Heart right ventricle (tissue), 16 donors: ENCODE measurements at regions of chr10 and their contacts with region 1.

Region 1: GRCh38 chr10:103192451-103193106 is 493 bp downstream of the NT5C2 start:
- DNase-seq: peak; percentile 82 to 86
- ATAC-seq: peak; percentile 70 to 83 (median 77)
- H3K4me3 ChIP-seq: peak overlapping the region; percentile 61 to 97 (median 82)
- H3K27ac ChIP-seq: peak overlapping the region; percentile 93 to 100 (median 98)
- H3K4me1 ChIP-seq: peaks cover 3 to 76% (median 60%) of the 10 kb centered on the region in 9 donors
- H3K27me3 ChIP-seq: no peaks in the 10 kb centered on the region
- CTCF ChIP-seq: peak in 1 of 9 donors; percentile 4

Region 2: GRCh38 chr10:102917962-102918816 is 274.4 kb before region 1 on chr10 and contains the start of gene CNNM2:
- intact Hi-C with region 1: loop called in 1 of 10 experiments (anchors 5 kb)
- DNase-seq: peak; percentile 99 to 100
- ATAC-seq: peak; percentile 96 to 99 (median 98)
- H3K4me3 ChIP-seq: peak within 1 kb of the TSS; percentile 65 to 100 (median 91)
- H3K27ac ChIP-seq: peak within 1 kb of the TSS; percentile 58 to 93 (median 84)
- H3K4me1 ChIP-seq: peaks cover 6 to 61% (median 43%) of the 10 kb centered on the region in 9 donors
- H3K27me3 ChIP-seq: peaks cover 0 to 13% (median 0%) of the 10 kb centered on the region in 7 donors
- CTCF ChIP-seq: peak in 1 of 9 donors; percentile 19
- total RNA-seq, gene CNNM2: 2.0 to 5.3 (median 4.1) TPM

Region 3: DNA sequence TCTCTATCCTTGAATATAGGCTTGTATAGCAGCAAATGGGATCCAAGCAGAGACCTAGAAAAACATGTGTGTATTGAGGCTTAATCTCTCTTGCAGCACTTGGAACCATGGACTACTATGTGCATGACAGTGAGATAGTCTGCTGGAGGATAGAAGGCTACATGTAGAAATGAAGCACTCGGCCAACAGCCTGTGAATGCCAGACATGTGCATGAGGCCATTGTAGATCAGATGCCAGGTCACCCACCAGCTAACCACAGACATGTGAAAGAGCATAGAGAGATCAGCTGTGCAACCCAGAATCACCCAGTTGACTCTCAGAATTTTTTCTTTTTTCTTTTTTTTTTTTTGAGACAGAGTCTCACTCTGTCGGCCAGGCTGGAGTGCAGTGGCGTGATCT is 90.4 kb before region 1 on chr10:
- intact Hi-C with region 1: loop called in 1 of 10 experiments (anchors 5 kb)
- DNase-seq: no peak
- ATAC-seq: peak in 5 of 8 donors; percentile 28 to 59 (median 51)
- H3K4me3 ChIP-seq: no peak overlapping the region
- H3K27ac ChIP-seq: no peak overlapping the region
- H3K4me1 ChIP-seq: peaks cover 0 to 34% (median 4%) of the 10 kb centered on the region in 9 donors
- H3K27me3 ChIP-seq: no peaks in the 10 kb centered on the region
- CTCF ChIP-seq: no peak

Region 4: GRCh38 chr10:103145860-103146466 is 46.6 kb before region 1 on chr10:
- intact Hi-C with region 1: loop called in 5 of 10 experiments (anchors 5 kb)
- DNase-seq: peak; percentile 21 to 91
- ATAC-seq: peak; percentile 80 to 91 (median 88)
- H3K4me3 ChIP-seq: peak overlapping the region in 6 of 10 donors; percentile 3 to 39 (median 35)
- H3K27ac ChIP-seq: peak overlapping the region; percentile 28 to 74 (median 62)
- H3K4me1 ChIP-seq: peaks cover 0 to 63% (median 30%) of the 10 kb centered on the region in 9 donors
- H3K27me3 ChIP-seq: no peaks in the 10 kb centered on the region
- CTCF ChIP-seq: no peak

Region 5: GRCh38 chr10:103153302-103154197 is 39.0 kb before region 1 on chr10:
- intact Hi-C with region 1: loop called in 5 of 10 experiments (anchors 5 kb)
- DNase-seq: peak in 1 of 2 donors; percentile 34
- ATAC-seq: peak in 7 of 8 donors; percentile 40 to 65 (median 56)
- H3K4me3 ChIP-seq: peak overlapping the region in 8 of 10 donors; percentile 8 to 45 (median 30)
- H3K27ac ChIP-seq: peak overlapping the region; percentile 29 to 86 (median 74)
- H3K4me1 ChIP-seq: peaks cover 0 to 67% (median 48%) of the 10 kb centered on the region in 9 donors
- H3K27me3 ChIP-seq: no peaks in the 10 kb centered on the region
- CTCF ChIP-seq: no peak

Region 6: GRCh38 chr10:103225939-103226338 is 33.4 kb after region 1 on chr10:
- intact Hi-C with region 1: loop called in 4 of 10 experiments (anchors 2 to 5 kb)
- DNase-seq: no peak
- ATAC-seq: no peak
- H3K4me3 ChIP-seq: no peak overlapping the region
- H3K27ac ChIP-seq: peak overlapping the region in 1 of 10 donors; percentile 56
- H3K4me1 ChIP-seq: peaks cover 6 to 45% (median 13%) of the 10 kb centered on the region in 9 donors
- H3K27me3 ChIP-seq: no peaks in the 10 kb centered on the region
- CTCF ChIP-seq: no peak

Region 7: DNA sequence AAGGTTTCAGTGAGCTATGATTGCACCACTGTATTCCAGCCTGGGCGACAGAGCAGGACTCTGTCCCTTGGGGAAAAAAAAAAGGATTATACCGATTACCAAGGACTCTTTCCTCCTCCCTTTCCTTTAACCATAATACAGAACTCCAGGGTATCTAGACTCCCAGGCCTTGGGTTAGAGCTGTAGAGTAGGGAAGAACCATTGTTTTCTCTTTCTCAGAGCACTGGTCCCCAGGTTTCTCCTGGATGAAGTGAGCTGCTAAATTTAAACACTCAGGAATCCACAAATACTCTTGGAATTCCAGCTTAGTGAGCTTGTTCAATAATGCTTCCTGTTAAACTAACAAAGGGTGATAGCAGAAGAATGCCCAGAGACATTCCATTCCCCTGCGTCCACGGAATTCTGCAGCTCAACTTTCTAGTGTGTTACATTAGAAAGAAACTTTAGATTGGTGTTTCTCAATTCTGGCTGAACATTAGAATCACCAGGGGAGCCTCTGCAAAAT is 38.5 kb after region 1 on chr10:
- intact Hi-C with region 1: loop called in 4 of 10 experiments (anchors 2 to 5 kb)
- DNase-seq: peak in 1 of 2 donors; percentile 22
- ATAC-seq: peak; percentile 32 to 80 (median 68)
- H3K4me3 ChIP-seq: peak overlapping the region in 2 of 10 donors; percentile 6 to 7
- H3K27ac ChIP-seq: peak overlapping the region; percentile 68 to 95 (median 86)
- H3K4me1 ChIP-seq: peaks cover 7 to 47% (median 28%) of the 10 kb centered on the region in 9 donors
- H3K27me3 ChIP-seq: no peaks in the 10 kb centered on the region
- CTCF ChIP-seq: no peak